Calu3 (cell line): ENCODE measurements at regions of chrX and their contacts with region 1.

Region 1: GRCh38 chrX:104335758-104336157 is 81.0 kb upstream of the ESX1 start:
- DNase-seq: no peak
- H3K4me3 Mint-ChIP-seq: no peak overlapping the region
- H3K27ac Mint-ChIP-seq: no peak overlapping the region
- H3K4me1 Mint-ChIP-seq: peaks cover 16% of the 10 kb centered on the region
- H3K27me3 Mint-ChIP-seq: no peaks in the 10 kb centered on the region
- CTCF ChIP-seq: no peak

Region 2: DNA sequence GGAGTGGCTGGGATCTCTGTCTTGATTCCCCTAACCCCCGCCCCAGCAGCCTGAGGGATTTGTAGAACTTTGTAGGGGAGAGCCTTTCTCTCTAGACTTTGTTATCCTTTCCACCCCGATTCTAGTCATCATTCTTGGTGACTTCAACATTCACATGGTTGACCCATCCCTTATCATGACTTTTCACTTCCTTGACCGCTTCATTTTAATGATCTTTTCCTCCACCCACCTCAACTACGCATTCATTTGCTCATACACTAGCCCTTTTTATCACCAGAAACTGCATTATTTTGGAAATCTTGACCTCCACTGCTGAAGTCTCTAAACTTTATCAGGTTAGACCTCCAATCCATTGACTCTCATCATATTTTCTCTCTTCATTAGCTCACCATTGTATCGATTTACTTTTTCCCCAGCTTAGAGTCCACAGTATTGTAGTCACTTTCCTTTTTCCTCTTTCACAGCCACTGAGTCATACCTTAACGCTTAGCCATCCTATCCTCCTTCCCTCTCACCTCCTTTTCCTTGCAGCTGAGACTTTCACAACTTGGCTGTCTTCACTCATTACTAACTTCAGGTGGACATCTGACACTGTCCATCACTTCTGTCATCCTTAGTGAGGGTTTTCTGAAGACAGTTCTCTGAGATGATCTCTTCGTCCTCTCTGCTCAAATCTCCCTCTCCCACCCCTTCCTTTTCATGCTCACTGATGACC is 10.7 kb before region 1 on chrX:
- CTCF ChIA-PET with region 1: interaction called, 11 read pairs
- intact Hi-C with region 1: no loop called
- DNase-seq: no peak
- H3K4me3 Mint-ChIP-seq: peak overlapping the region; percentile 3
- H3K27ac Mint-ChIP-seq: peak overlapping the region; percentile 83
- H3K4me1 Mint-ChIP-seq: peaks cover 31% of the 10 kb centered on the region
- H3K27me3 Mint-ChIP-seq: no peaks in the 10 kb centered on the region
- CTCF ChIP-seq: no peak

Region 3: DNA sequence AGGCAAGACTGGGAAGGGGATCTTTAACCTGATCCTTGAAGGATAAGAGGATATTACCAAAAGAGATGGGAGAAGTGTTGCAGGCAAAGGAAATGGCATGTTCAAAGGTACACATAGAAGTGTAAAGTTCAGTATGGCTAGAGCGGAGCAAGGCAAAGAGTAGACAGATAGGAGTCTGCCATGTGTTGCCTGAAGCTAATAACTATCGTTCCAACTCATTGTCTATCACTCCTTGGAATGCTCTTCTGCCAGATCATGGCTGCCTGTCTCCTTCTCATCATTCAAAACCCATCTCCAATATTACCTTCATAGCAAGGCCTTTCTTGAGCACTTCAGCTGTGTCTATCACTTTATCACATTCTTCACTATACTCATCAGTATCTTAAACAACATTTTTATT is 175.1 kb after region 1 on chrX:
- CTCF ChIA-PET with region 1: no interaction called
- intact Hi-C with region 1: no loop called
- DNase-seq: no peak
- H3K4me3 Mint-ChIP-seq: no peak overlapping the region
- H3K27ac Mint-ChIP-seq: no peak overlapping the region
- H3K4me1 Mint-ChIP-seq: no peaks in the 10 kb centered on the region
- H3K27me3 Mint-ChIP-seq: no peaks in the 10 kb centered on the region
- CTCF ChIP-seq: no peak